CD4-positive, alpha-beta T cell (primary cell): ENCODE measurements at regions of chr2 and their contacts with region 1.

Region 1: DNA sequence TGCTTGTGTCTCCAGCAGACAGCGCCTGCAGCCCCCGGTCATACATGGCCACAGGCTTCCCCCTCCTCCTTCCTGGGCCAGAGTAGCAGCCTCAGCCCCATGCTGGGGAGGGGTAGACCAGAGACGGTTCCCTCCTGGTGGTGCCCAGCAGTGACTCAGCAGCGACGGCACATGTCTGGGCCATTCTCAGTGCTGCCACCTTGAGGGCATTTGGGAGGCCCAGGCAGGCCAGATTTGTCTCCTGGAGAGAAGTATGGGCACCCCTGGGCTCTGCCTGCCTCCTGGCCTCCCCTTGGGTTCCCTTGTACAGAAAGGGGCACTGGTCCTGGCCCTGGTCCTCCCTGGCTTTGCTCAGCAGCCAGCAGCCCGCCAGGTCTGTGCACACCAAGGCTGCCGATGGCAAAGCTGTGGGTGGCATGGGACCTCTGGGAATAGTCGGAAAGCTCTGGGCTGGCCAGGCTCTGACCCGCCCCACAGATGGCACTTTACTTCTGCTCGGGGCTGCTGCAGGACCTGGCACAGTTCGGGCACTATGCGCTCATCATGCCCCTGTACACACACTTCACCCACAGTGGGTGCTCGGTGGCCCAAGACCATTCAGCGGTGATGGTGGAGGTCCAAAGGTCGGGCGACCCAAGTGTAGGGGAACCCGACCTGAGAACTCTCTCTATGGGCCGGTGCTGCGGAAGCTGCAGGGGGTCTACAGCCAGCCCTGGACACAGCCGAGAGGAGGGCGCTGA is 11.4 kb upstream of the ALPI start:
- DNase-seq: peak; percentile 26 to 77 (median 50)
- ATAC-seq: peak; percentile 55
- H3K4me3 ChIP-seq: no peak overlapping the region
- H3K4me3 Mint-ChIP-seq: no peak overlapping the region
- H3K27ac ChIP-seq: no peak overlapping the region
- H3K27ac Mint-ChIP-seq: no peak overlapping the region
- H3K4me1 ChIP-seq: peaks cover 11% of the 10 kb centered on the region
- H3K4me1 Mint-ChIP-seq: no peaks in the 10 kb centered on the region
- H3K27me3 ChIP-seq: no peaks in the 10 kb centered on the region
- H3K27me3 Mint-ChIP-seq: peaks cover 3% of the 10 kb centered on the region
- CTCF ChIP-seq: peak; percentile 57

Region 2: GRCh38 chr2:231925303-231926179 is 519.0 kb before region 1 on chr2:
- CTCF ChIA-PET with region 1: no interaction called
- POLR2A ChIA-PET with region 1: no interaction called
- intact Hi-C with region 1: loop called (anchors 1 to 5 kb)
- DNase-seq: peak; percentile 43 to 86 (median 62)
- ATAC-seq: peak; percentile 47
- H3K4me3 ChIP-seq: peak overlapping the region; percentile 29
- H3K4me3 Mint-ChIP-seq: no peak overlapping the region
- H3K27ac ChIP-seq: no peak overlapping the region
- H3K27ac Mint-ChIP-seq: no peak overlapping the region
- H3K4me1 ChIP-seq: peaks cover 22% of the 10 kb centered on the region
- H3K4me1 Mint-ChIP-seq: peaks cover 6% of the 10 kb centered on the region
- H3K27me3 ChIP-seq: peaks cover 40 to 58% of the 10 kb centered on the region in 2 experiments
- H3K27me3 Mint-ChIP-seq: peaks cover 55% of the 10 kb centered on the region
- CTCF ChIP-seq: peak; percentile 80

Region 3: DNA sequence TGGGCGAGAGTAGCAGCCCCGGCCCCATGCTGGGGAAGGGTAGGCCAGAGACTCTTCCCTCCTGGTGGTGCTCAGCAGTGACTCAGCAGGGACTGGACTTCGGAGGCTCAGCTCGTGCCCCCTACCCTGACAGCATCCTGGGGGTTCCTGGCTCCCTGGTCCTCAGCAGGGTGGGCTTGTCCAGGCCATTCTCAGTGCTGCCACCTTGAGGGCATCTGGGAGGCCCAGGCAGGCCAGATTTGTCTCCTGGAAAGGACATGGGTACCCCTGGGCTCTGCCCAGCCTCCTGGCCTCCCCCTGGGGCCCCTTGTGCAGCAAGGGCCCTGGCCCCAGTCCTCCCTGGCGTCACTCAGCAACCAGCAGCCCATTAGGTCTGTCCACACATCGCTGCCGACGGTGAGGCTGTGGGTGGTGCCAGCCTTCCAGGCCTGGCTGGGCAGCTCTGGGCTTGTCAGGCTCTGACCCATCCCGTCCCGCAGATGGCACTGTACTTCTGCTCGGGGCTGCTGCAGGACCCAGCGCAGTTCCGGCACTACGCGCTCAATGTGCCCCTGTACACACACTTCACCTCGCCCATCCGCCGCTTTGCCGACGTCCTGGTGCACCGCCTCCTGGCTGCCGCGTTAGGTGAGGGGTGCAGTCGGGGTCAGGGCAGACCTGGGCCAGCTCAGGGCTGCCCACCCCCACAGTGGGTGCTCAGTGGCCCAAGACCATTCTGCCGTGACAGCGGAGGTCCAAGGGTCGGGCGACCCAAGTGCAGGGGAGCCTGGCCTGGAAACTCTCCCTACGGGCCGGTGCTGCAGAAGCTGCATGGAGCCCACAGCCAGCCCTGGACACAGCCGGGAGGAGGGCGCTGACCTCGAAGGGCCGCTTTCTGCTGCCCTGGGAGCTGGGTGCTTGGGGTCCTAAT is 111.0 kb before region 1 on chr2:
- CTCF ChIA-PET with region 1: no interaction called
- POLR2A ChIA-PET with region 1: no interaction called
- intact Hi-C with region 1: loop called (anchors 5 to 10 kb)
- DNase-seq: peak in 2 of 14 experiments; percentile 4 to 30
- ATAC-seq: no peak
- H3K4me3 ChIP-seq: no peak overlapping the region
- H3K4me3 Mint-ChIP-seq: no peak overlapping the region
- H3K27ac ChIP-seq: no peak overlapping the region
- H3K27ac Mint-ChIP-seq: no peak overlapping the region
- H3K4me1 ChIP-seq: no peaks in the 10 kb centered on the region
- H3K4me1 Mint-ChIP-seq: no peaks in the 10 kb centered on the region
- H3K27me3 ChIP-seq: no peaks in the 10 kb centered on the region
- H3K27me3 Mint-ChIP-seq: no peaks in the 10 kb centered on the region
- CTCF ChIP-seq: no peak

Region 4: GRCh38 chr2:232385660-232386489 is 58.7 kb before region 1 on chr2:
- CTCF ChIA-PET with region 1: no interaction called
- POLR2A ChIA-PET with region 1: no interaction called
- intact Hi-C with region 1: no loop called
- DNase-seq: no peak
- ATAC-seq: no peak
- H3K4me3 ChIP-seq: no peak overlapping the region
- H3K4me3 Mint-ChIP-seq: no peak overlapping the region
- H3K27ac ChIP-seq: no peak overlapping the region
- H3K27ac Mint-ChIP-seq: no peak overlapping the region
- H3K4me1 ChIP-seq: peaks cover 3% of the 10 kb centered on the region
- H3K4me1 Mint-ChIP-seq: no peaks in the 10 kb centered on the region
- H3K27me3 ChIP-seq: peaks cover 34 to 45% of the 10 kb centered on the region in 2 experiments
- H3K27me3 Mint-ChIP-seq: peaks cover 57% of the 10 kb centered on the region
- CTCF ChIP-seq: no peak

Region 5: GRCh38 chr2:232744963-232745362 is 300.4 kb after region 1 on chr2:
- CTCF ChIA-PET with region 1: no interaction called
- POLR2A ChIA-PET with region 1: no interaction called
- intact Hi-C with region 1: no loop called
- DNase-seq: no peak
- ATAC-seq: no peak
- H3K4me3 ChIP-seq: no peak overlapping the region
- H3K4me3 Mint-ChIP-seq: no peak overlapping the region
- H3K27ac ChIP-seq: no peak overlapping the region
- H3K27ac Mint-ChIP-seq: peak overlapping the region; percentile 22
- H3K4me1 ChIP-seq: no peaks in the 10 kb centered on the region
- H3K4me1 Mint-ChIP-seq: peaks cover 16% of the 10 kb centered on the region
- H3K27me3 ChIP-seq: no peaks in the 10 kb centered on the region
- H3K27me3 Mint-ChIP-seq: no peaks in the 10 kb centered on the region
- CTCF ChIP-seq: no peak